ENCODE measurements at regions of chrX and their contacts with region 1.

Region 1: GRCh38 chrX:72540318-72540717 is 32.3 kb downstream of the HDAC8 start:
- DNase-seq: no peak
- ATAC-seq: no peak
- H3K4me3 ChIP-seq: no peak overlapping the region
- H3K27ac ChIP-seq: no peak overlapping the region
- H3K4me1 ChIP-seq: no peaks in the 10 kb centered on the region
- H3K27me3 ChIP-seq: no peaks in the 10 kb centered on the region
- CTCF ChIP-seq: peak; percentile 29; the same call in 1 of the 2 replicates

Region 2: GRCh38 chrX:72238721-72239475 is 301.4 kb before region 1 on chrX and contains the start of gene ERCC6L:
- CTCF ChIA-PET with region 1: no interaction called
- POLR2A ChIA-PET with region 1: interaction called, 17 read pairs
- in situ Hi-C with region 1: no loop called
- intact Hi-C with region 1: no loop called
- DNase-seq: peak; percentile 71
- ATAC-seq: peak; percentile 99
- H3K4me3 ChIP-seq: peak within 1 kb of the TSS; percentile 82 to 90
- H3K27ac ChIP-seq: peak within 1 kb of the TSS; percentile 86
- H3K4me1 ChIP-seq: no peaks in the 10 kb centered on the region
- H3K27me3 ChIP-seq: no peaks in the 10 kb centered on the region
- CTCF ChIP-seq: no peak
- total RNA-seq, gene ERCC6L: 17.3 TPM

Region 3: DNA sequence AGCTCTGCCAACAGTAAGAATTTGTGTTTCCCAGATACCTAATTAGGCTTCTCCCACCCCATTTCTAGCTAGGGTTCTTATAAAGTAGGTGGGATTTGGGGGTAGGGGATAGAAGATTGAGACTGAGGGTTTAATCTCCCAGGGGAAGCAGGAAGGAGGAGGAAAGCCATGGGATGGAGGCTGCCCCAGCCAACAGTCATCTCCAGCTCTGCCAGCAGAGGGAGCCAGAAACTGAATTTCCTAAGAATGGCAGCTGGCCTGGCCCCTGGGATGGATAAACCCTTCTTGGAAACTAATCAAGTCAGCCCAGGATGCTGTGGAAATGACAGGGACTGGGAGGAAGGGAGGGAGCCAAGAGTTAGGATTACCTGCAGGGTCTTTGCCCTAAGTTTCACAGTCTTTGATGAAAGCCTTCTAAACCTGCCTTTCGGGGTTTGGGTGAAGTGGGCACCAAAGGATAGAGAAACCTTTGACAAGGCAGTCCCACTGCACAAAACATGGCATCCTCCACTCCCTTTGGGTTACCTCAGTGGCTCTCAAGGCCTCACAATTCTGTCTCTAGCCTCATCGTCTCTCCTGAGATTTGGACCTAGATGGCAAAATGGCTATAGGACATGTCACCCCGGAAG is 294.7 kb before region 1 on chrX:
- CTCF ChIA-PET with region 1: interaction called, 10 read pairs
- POLR2A ChIA-PET with region 1: interaction called, 3 read pairs
- in situ Hi-C with region 1: no loop called
- intact Hi-C with region 1: no loop called
- DNase-seq: no peak
- ATAC-seq: no peak; the same call in 1 of the 2 replicates
- H3K4me3 ChIP-seq: no peak overlapping the region
- H3K27ac ChIP-seq: no peak overlapping the region
- H3K4me1 ChIP-seq: no peaks in the 10 kb centered on the region
- H3K27me3 ChIP-seq: no peaks in the 10 kb centered on the region
- CTCF ChIP-seq: peak; percentile 87

Region 4: GRCh38 chrX:72666451-72666850 is 126.1 kb after region 1 on chrX:
- CTCF ChIA-PET with region 1: no interaction called
- POLR2A ChIA-PET with region 1: no interaction called
- in situ Hi-C with region 1: no loop called
- intact Hi-C with region 1: no loop called
- DNase-seq: no peak
- ATAC-seq: no peak
- H3K4me3 ChIP-seq: no peak overlapping the region
- H3K27ac ChIP-seq: no peak overlapping the region
- H3K4me1 ChIP-seq: no peaks in the 10 kb centered on the region
- H3K27me3 ChIP-seq: no peaks in the 10 kb centered on the region
- CTCF ChIP-seq: no peak

Measured in Panc1 (cell line).